HEK293T (cell line): ENCODE measurements at regions of chr1 and their contacts with region 1.

Region 1: GRCh38 chr1:46340404-46341221 is at the start of gene NSUN4:
- DNase-seq: peak; percentile 82

Region 2: GRCh38 chr1:46003315-46003714 is 337.3 kb before region 1 on chr1:
- CTCF ChIA-PET with region 1: no interaction called
- POLR2A ChIA-PET with region 1: no interaction called
- DNase-seq: no peak

Region 3: DNA sequence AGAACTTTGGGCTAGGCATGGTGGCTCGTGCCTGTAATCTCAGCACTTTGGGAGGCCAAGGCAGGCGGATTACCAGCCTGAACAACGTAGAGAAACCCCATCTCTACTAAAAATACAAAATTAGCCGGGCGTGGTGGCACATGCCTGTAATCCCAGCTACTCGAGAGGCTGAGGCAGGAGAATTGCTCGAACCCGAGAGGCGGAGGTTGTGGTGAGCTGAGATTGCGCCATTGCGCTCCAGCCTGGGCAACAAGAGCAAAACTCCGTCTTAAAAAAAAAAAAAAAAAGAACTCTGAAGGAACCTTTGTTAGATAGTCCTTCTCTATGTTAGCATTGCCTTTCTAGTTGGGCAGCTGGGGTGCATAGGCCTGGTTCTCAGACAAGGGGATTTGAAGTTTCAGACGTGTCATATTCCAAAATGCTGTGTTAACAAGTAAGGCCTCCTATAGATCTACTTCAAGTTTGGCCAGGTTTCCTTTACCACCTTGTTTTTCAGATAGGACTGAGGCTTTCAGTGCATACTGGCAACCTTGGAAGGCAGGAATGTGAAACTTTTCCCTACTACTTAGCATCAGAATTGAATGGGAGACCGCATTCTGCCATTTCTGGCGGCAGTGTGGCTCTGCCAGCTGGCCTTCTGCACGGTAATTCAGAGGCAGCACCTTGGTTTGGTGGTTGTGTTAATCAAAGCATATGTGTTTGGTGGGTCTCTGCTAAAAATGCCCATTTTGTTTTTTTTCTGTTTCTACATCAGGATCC is 31.0 kb before region 1 on chr1:
- CTCF ChIA-PET with region 1: no interaction called
- POLR2A ChIA-PET with region 1: interaction called, 29 read pairs
- DNase-seq: no peak